Mammary epithelial cell (primary cell): ENCODE measurements at regions of chr11 and their contacts with region 1.

Region 1: DNA sequence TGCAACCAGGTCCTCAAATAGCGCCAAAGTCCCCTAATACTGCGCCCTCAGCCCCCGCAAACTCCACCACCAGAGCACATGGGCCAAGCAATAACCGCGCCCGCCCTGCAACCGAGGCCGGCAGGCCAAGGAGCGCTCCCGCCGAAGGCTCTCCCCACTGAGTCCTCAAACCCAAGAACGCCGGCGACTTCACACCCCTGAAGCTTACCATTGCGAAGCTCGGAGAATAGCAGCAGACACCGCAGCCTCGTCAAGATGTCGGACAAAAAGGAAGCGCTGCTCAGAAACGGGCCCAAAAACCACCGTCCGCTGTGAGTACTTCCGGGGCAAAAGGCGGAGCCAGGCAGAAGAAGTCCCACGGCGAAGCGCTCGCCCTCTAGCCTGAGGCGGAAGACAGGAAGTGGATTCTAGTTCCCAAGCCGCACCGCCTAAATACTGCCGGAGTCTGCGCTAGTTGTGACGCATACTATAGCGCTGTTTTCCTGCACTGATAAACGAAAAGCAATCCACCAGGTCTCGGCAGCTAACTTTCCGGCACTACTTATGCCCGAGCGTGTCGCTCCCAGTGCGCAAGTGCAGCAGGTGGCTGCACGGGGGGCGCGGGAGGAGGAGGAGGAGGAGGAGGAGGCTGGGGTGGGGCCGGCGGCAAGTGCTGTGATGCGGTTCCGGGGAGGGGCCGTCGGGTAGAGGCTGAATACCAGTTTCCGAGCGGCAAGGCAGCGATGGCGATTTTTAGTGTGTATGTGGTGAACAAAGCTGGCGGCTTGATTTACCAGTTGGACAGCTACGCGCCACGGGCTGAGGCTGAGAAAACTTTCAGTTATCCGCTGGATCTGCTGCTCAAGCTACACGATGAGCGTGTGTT is at the starts of genes RPS25 and TRAPPC4:
- DNase-seq: peak; percentile 96
- H3K4me3 ChIP-seq: peak within 1 kb of the TSS; percentile 61 to 95 (median 78)
- H3K27ac ChIP-seq: peak within 1 kb of the TSS; percentile 64
- H3K4me1 ChIP-seq: peaks cover 16% of the 10 kb centered on the region
- H3K27me3 ChIP-seq: no peaks in the 10 kb centered on the region
- CTCF ChIP-seq: no peak
- total RNA-seq, gene RPS25: 474 to 819 TPM
- total RNA-seq, gene TRAPPC4: 51.1 to 58.2 TPM

Region 2: DNA sequence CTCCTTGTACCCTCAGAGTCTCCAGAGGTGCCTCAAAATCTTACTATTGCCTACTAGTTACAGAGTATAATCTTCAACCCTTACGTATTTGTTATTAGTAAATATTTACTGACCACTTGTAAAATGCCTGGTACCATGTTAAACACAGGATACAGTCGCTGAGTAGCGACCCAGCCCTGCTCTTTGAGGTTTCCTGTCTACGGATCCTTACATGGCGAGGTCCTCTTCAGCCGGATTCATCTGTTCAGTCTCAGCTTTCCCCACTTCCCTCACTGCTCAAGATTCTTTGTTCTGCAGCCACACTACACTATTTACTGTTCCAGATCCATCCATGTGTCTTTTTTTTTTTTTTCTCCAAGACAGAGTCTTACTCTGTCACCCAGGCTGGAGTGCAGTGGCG is 504.2 kb before region 1 on chr11:
- CTCF ChIA-PET with region 1: no interaction called
- dilution Hi-C with region 1: no loop called
- in situ Hi-C with region 1: no loop called
- intact Hi-C with region 1: no loop called
- DNase-seq: no peak
- H3K4me3 ChIP-seq: no peak overlapping the region
- H3K27ac ChIP-seq: no peak overlapping the region
- H3K4me1 ChIP-seq: no peaks in the 10 kb centered on the region
- H3K27me3 ChIP-seq: no peaks in the 10 kb centered on the region
- CTCF ChIP-seq: no peak

Region 3: GRCh38 chr11:118883368-118884071 is 134.8 kb before region 1 on chr11 and contains the start of gene CXCR5:
- CTCF ChIA-PET with region 1: no interaction called
- dilution Hi-C with region 1: no loop called
- in situ Hi-C with region 1: no loop called
- intact Hi-C with region 1: no loop called
- DNase-seq: no peak
- H3K4me3 ChIP-seq: no peak within 1 kb of the TSS
- H3K27ac ChIP-seq: no peak within 1 kb of the TSS
- H3K4me1 ChIP-seq: peaks cover 11% of the 10 kb centered on the region
- H3K27me3 ChIP-seq: no peaks in the 10 kb centered on the region
- CTCF ChIP-seq: peak in 1 of 2 donors; percentile 8
- total RNA-seq, gene CXCR5: not detected

Region 4: DNA sequence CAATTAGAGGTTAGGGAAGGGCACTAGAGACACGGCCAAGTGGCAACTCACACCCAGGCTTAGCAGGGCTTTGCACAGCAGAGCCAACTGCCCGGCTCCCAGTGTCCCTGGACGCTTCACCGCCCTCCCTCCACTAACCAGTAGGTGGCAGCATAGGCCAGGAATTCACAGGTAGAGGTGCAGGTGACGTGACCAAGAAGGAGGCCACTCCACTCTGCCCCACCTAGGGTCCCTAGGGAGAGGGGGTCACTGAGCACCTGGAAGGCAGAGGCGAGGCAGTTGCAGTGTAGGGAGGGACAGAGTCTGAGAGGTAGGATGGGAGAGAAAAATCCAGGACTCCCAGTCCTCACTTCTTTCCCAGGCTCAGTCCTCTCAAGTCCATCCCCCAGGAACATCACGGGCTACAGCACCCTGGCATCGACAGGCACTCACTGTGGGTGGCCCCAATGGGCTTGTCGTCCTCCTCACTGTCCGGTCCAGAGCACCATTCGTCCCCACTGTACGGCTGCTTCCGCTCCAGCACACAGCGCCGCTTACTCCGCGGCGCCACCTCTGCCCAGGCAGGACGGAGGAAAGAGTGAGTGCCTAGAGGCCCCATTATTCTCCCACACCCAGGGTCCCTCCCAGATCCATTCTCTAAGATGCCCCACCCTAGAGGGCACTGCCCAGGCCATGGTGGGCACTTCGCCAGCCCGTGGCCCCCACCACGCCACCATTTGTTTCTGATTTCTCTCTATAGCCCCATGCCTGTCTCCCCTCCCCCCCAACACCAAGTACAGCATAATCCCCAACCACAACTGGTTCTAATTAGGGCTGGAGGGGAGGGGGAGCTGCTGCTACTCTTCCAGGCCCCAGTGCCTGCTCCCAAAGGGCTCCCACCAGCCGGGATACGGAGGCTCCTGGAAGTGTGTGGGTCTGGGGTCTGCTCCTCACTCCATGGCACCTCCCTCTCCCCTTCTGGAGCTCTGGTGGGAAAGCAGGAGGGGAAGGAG is 111.0 kb before region 1 on chr11:
- CTCF ChIA-PET with region 1: no interaction called
- dilution Hi-C with region 1: loop called (anchors 5 kb)
- in situ Hi-C with region 1: no loop called
- intact Hi-C with region 1: no loop called
- DNase-seq: peak; percentile 69
- H3K4me3 ChIP-seq: no peak overlapping the region
- H3K27ac ChIP-seq: no peak overlapping the region
- H3K4me1 ChIP-seq: peaks cover 43% of the 10 kb centered on the region
- H3K27me3 ChIP-seq: no peaks in the 10 kb centered on the region
- CTCF ChIP-seq: peak; percentile 88 to 92

Region 5: DNA sequence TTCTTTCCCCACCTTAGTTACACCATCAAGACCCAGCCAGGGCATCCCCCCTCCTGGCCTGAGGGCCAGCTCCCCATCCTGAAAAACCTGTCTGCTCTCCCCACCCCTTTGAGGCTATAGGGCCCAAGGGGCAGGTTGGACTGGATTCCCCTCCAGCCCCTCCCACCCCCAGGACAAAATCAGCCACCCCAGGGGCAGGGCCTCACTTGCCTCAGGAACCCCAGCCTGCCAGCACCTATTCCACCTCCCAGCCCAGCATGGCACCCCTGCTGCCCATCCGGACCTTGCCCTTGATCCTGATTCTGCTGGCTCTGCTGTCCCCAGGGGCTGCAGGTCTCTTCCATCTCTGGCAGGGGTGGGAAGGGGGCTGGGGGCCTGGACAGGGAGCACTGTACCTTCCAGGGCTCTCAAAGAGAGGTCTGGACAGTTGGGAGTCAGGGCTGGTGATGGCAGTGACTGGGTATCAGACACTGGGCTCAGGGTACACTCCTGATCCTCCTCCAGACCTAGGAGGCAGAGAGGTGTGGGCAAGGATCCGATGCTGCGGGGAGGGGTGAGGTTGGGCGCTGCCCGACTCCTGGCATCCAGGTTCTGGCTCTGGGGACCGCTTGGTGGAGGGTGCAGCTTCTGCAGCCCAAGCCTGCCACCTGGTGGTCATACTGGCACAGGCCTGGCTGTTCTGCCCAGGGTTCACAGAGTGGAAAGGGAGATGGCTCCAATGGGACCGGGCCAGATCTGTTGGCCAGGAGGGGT is 62.0 kb before region 1 on chr11 and contains the start of gene UPK2:
- CTCF ChIA-PET with region 1: no interaction called
- dilution Hi-C with region 1: loop called (anchors 5 kb)
- in situ Hi-C with region 1: no loop called
- intact Hi-C with region 1: no loop called
- DNase-seq: peak; percentile 72
- H3K4me3 ChIP-seq: no peak within 1 kb of the TSS
- H3K27ac ChIP-seq: no peak within 1 kb of the TSS
- H3K4me1 ChIP-seq: peaks cover 2% of the 10 kb centered on the region
- H3K27me3 ChIP-seq: no peaks in the 10 kb centered on the region
- CTCF ChIP-seq: peak; percentile 95 to 98
- total RNA-seq, gene UPK2: 0.45 TPM in 1 of 2 donors, not detected in the other

Region 6: DNA sequence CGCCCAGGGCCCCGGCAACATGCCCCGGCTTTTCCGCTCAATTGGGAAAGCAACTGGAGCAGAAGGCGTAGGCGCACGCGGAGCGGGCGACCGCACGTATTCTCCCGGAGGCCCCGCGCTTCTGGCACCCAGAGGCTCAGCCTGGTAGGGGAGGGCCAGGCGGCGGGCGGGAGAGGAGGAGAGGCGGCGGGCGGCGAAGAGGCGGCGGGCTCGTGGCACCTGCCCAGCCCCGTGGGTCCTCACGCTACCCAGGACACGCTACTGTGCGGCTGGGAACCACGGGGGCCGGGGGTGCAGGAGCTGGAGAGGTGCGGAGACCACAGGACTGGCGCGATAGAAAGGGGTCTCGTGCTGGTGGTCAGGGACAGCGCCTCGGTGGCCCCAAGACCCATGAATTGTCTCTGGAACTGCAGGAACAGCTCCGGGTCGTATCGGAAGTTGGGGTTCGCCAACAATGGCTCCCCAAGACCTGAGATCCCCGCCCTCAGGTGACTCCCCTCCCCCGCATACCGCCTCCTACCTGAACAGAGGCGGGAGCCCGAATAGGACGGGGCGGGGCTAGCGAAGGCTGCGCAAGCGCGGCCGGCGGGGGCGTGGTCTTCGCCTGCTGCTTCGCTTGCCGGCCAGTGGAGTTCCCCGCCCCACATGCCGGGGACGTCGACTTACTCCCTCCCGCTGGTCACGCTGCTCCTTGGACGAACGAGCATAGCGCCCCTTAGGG is 12.2 kb after region 1 on chr11 and contains the start of gene SLC37A4:
- CTCF ChIA-PET with region 1: no interaction called
- dilution Hi-C with region 1: no loop called
- in situ Hi-C with region 1: no loop called
- intact Hi-C with region 1: loop called (anchors 1 kb)
- DNase-seq: peak; percentile 96
- H3K4me3 ChIP-seq: peak within 1 kb of the TSS; percentile 78 to 97 (median 87)
- H3K27ac ChIP-seq: peak within 1 kb of the TSS; percentile 52
- H3K4me1 ChIP-seq: peaks cover 8% of the 10 kb centered on the region
- H3K27me3 ChIP-seq: no peaks in the 10 kb centered on the region
- CTCF ChIP-seq: peak in 1 of 2 donors; percentile 88
- total RNA-seq, gene SLC37A4: 15.8 to 16.7 TPM

Region 7: GRCh38 chr11:119077839-119078238 is 59.5 kb after region 1 on chr11:
- CTCF ChIA-PET with region 1: no interaction called
- dilution Hi-C with region 1: loop called (anchors 10 kb)
- in situ Hi-C with region 1: no loop called
- intact Hi-C with region 1: no loop called
- DNase-seq: no peak
- H3K4me3 ChIP-seq: no peak overlapping the region
- H3K27ac ChIP-seq: no peak overlapping the region
- H3K4me1 ChIP-seq: no peaks in the 10 kb centered on the region
- H3K27me3 ChIP-seq: no peaks in the 10 kb centered on the region
- CTCF ChIP-seq: no peak

Region 8: DNA sequence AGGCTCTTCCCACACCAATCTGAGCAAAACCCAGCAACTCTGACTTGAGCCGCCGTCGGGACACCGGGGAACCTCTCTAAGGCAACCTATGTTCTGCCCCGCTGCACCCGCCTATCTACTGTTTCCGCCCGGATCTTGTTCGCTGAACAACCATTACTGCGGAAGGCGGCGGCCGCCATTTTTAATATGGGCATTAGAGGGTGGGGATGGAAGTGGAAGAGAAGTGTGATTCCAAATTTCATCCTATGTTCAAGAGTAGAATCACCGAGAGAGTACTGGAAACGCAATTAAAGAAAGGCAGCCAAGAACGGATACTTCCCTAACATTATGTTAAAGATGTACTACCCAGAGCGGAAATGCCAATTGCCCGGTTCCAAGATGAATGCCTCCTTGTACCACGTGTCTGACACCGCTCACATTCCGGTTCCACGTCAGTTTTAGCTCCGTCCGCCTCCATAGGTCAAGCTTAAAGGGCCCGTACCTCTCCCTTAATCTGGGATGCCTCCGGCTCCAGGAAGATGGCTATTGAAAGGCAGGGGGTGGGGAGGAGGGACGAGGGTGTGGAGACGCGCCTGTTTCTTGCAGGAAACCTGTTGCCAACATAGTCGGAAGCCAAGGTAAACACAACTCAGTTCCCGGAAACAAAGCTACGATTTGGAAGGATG is 83.6 kb after region 1 on chr11 and contains the start of gene DPAGT1:
- CTCF ChIA-PET with region 1: no interaction called
- dilution Hi-C with region 1: loop called (anchors 5 kb)
- in situ Hi-C with region 1: no loop called
- intact Hi-C with region 1: no loop called
- DNase-seq: peak; percentile 97
- H3K4me3 ChIP-seq: peak within 1 kb of the TSS; percentile 80 to 81 (median 81)
- H3K27ac ChIP-seq: peak within 1 kb of the TSS; percentile 91
- H3K4me1 ChIP-seq: peaks cover 19% of the 10 kb centered on the region
- H3K27me3 ChIP-seq: no peaks in the 10 kb centered on the region
- CTCF ChIP-seq: no peak
- total RNA-seq, gene DPAGT1: 22.2 to 49.3 TPM

Region 9: DNA sequence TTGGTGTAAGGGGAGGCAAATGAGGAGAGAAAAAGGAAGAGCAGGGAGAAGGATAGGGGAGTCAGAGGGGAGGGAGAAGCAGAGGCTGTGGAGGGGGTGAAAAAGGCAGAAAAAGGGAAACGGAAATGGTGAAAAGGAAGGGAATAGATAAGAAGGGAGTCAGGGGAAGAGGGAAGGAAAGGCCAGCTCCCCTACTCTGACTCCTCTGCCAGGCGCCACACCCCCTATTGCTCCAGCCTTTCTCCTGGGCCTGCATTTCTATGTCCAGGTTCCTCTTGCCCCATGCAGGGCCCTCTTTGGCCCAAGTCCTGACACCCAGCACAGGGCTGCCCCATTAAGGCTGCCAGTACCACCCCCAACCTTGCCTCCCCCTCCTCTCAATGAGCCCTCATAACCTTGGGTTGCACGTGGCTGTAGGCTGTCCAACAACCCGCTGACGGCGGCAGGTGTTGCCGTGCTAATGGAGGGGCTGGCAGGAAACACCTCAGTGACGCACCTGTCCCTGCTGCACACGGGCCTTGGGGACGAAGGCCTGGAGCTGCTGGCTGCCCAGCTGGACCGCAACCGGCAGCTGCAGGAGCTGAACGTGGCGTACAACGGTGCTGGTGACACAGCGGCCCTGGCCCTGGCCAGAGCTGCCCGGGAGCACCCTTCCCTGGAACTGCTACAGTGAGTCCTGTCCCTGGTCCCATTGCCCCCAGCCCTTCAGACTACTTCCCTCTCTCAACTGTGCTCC is 163.5 kb after region 1 on chr11:
- CTCF ChIA-PET with region 1: no interaction called
- dilution Hi-C with region 1: no loop called
- in situ Hi-C with region 1: no loop called
- intact Hi-C with region 1: no loop called
- DNase-seq: no peak
- H3K4me3 ChIP-seq: no peak overlapping the region
- H3K27ac ChIP-seq: no peak overlapping the region
- H3K4me1 ChIP-seq: no peaks in the 10 kb centered on the region
- H3K27me3 ChIP-seq: no peaks in the 10 kb centered on the region
- CTCF ChIP-seq: no peak

Region 10: GRCh38 chr11:119196833-119197483 is 178.7 kb after region 1 on chr11:
- CTCF ChIA-PET with region 1: no interaction called
- dilution Hi-C with region 1: loop called (anchors 5 kb)
- in situ Hi-C with region 1: no loop called
- intact Hi-C with region 1: no loop called
- DNase-seq: peak; percentile 80
- H3K4me3 ChIP-seq: no peak overlapping the region
- H3K27ac ChIP-seq: no peak overlapping the region
- H3K4me1 ChIP-seq: no peaks in the 10 kb centered on the region
- H3K27me3 ChIP-seq: no peaks in the 10 kb centered on the region
- CTCF ChIP-seq: peak; percentile 72 to 74

Region 11: GRCh38 chr11:119421941-119422808 is 403.9 kb after region 1 on chr11:
- CTCF ChIA-PET with region 1: no interaction called
- dilution Hi-C with region 1: no loop called
- in situ Hi-C with region 1: no loop called
- intact Hi-C with region 1: no loop called
- DNase-seq: no peak
- H3K4me3 ChIP-seq: peak overlapping the region; percentile 37 to 61 (median 44)
- H3K27ac ChIP-seq: no peak overlapping the region
- H3K4me1 ChIP-seq: peaks cover 34% of the 10 kb centered on the region
- H3K27me3 ChIP-seq: no peaks in the 10 kb centered on the region
- CTCF ChIP-seq: no peak